PC-9 (cell line): ENCODE measurements at regions of chr10 and their contacts with region 1.

Region 1: DNA sequence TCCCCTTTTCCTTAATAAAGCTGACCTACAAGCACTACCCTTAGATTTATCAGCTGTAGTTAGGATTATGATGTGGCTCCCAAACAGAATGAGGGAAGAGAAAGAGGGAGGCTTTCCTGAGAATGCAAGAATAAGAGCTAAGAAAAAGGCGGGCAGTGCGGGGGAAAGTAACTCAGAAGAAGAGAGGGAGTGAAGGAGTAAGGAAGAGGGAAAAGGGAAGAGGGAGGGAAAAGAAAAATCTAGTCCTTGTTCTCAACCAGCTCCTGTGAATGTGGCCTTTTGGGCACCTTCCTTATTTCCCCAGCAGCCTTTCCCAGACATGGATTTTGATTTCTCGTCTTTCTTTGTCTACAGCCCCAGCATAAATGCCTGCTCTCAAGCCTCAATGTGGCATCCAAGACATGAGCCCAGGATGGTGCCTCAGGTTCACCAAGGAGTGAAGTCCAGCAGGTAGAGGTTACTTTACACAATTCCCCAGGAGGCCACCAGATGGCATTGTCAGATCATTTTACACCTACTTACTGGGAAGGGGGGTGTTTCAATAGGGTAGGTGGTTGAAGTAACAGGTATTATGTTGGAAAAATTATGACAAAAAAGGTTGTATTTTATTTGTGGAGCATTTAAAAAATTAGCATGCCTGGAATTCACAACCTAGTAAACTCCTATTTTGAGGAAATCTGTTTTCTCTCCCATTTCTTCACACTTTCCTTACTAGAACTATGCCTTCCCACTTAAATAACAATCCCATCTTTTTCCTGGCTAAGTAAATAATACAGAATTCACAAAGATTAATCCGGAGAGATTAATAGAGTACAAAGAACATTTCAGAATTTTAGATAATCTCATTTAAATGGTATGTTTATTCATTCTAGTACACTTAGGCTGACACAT is 106.5 kb downstream of the HTR7 start:
- DNase-seq: peak; percentile 37 to 43
- H3K4me3 ChIP-seq: no peak overlapping the region
- H3K27ac ChIP-seq: no peak overlapping the region
- H3K4me1 ChIP-seq: peaks cover 8% of the 10 kb centered on the region
- H3K27me3 ChIP-seq: no peaks in the 10 kb centered on the region
- CTCF ChIP-seq: peak; percentile 87

Region 2: GRCh38 chr10:89391917-89392756 is 1359.2 kb before region 1 on chr10 and contains the start of gene IFIT1:
- CTCF ChIA-PET with region 1: no interaction called
- POLR2A ChIA-PET with region 1: no interaction called
- intact Hi-C with region 1: no loop called
- DNase-seq: peak in 1 of 2 experiments; percentile 60
- H3K4me3 ChIP-seq: peak within 1 kb of the TSS; percentile 56
- H3K27ac ChIP-seq: peak within 1 kb of the TSS; percentile 61
- H3K4me1 ChIP-seq: peaks cover 7% of the 10 kb centered on the region
- H3K27me3 ChIP-seq: no peaks in the 10 kb centered on the region
- CTCF ChIP-seq: no peak
- total RNA-seq, gene IFIT1: 3.4 TPM in 2 replicates

Region 3: GRCh38 chr10:90769946-90770841 is 18.8 kb after region 1 on chr10:
- CTCF ChIA-PET with region 1: interaction called, 19 read pairs
- POLR2A ChIA-PET with region 1: no interaction called
- intact Hi-C with region 1: no loop called
- DNase-seq: no peak
- H3K4me3 ChIP-seq: no peak overlapping the region
- H3K27ac ChIP-seq: no peak overlapping the region
- H3K4me1 ChIP-seq: no peaks in the 10 kb centered on the region
- H3K27me3 ChIP-seq: no peaks in the 10 kb centered on the region
- CTCF ChIP-seq: no peak

Region 4: DNA sequence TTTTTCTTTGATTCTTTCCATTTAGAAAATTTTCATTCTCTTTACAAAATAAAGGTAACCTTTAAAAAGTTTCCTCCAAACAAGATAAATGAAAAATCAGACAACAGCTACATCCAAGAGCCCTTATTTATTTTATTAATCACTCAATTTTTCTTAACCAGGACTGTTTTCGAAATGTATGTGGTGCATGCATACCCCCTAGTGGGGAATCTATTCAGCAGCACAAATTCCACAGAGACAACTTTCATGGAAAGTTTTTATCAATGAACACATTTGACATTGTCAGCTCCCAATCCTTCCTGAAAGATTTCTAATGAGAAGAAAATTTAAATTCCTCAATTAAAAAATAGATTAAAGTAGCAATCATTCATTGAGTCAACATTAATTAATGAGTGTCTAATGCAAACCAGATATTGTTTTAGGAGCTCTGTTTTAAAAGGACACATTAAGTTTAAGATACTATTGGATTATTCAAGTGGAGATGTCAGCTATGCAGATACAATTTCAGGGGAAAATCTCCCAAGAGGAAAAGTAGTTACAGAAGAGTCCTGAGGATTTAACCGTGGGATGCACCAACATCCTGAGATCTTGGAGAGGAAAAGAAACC is 111.7 kb after region 1 on chr10:
- CTCF ChIA-PET with region 1: no interaction called
- POLR2A ChIA-PET with region 1: no interaction called
- intact Hi-C with region 1: loop called (anchors 1 kb)
- DNase-seq: no peak
- H3K4me3 ChIP-seq: no peak overlapping the region
- H3K27ac ChIP-seq: no peak overlapping the region
- H3K4me1 ChIP-seq: peaks cover 16% of the 10 kb centered on the region
- H3K27me3 ChIP-seq: no peaks in the 10 kb centered on the region
- CTCF ChIP-seq: peak; percentile 77

Region 5: DNA sequence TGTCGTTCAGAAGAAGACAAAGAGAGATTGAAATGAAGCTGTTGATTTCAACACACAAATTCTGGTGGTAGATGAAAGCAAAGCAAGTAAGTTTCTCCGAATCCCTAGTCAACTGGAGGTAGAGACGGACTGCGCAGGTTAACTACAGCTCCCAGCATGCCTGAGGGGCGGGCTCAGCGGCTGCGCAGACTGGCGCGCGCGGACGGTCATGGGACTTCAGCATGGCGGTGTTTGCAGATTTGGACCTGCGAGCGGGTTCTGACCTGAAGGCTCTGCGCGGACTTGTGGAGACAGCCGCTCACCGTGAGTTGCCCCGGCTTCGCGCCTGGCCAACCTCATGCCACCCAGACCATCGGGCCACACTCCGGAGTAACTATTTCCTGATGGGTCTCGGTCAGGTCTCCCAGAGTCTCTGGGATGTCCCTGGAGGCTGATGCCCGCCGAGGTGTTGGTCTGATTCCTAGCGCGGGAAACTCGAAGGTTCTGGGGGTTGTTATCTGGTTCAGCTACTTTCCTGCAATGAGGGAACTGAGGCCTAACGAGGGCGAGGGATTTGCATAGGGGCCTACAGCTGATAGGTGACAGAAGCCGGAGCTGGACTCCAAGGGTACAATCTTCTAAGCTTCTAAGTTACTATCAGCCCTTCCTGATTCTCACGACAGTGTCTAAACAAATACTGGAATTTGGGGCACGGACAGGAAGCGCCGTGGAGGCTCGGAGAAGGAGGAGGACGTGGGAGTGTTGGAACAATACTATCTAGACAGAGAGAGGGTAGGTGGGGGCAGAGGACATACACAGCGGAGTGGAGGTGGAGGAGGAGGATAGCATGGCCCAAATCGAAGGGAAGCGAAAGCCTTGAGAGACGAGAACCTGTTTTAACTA is 120.7 kb after region 1 on chr10 and contains the start of gene RPP30:
- CTCF ChIA-PET with region 1: interaction called, 4 read pairs
- POLR2A ChIA-PET with region 1: no interaction called
- intact Hi-C with region 1: loop called (anchors 2 kb)
- DNase-seq: peak; percentile 68 to 70
- H3K4me3 ChIP-seq: peak within 1 kb of the TSS; percentile 78
- H3K27ac ChIP-seq: no peak within 1 kb of the TSS
- H3K4me1 ChIP-seq: peaks cover 15% of the 10 kb centered on the region
- H3K27me3 ChIP-seq: no peaks in the 10 kb centered on the region
- CTCF ChIP-seq: no peak
- total RNA-seq, gene RPP30: 25.4 and 32.4 TPM in 2 replicates

Region 6: DNA sequence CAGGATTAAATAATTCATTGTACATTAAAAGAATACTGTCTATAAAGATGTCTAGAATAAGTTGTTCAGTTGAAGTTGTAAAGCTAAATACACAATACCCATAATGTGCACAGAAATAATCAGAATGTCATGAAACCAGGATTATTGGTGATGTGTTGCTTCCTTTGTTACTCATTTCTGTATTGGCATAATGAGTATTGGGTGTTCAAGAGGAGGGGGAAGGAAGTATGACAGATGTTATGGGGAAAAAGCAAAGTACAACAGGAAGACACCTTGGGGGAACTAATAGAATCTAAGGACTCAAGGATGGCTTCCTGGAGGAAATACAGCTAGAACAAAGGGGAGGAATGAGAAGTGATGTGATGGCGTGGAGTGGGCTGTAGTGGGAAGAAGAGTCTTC is 154.6 kb after region 1 on chr10:
- CTCF ChIA-PET with region 1: no interaction called
- POLR2A ChIA-PET with region 1: no interaction called
- intact Hi-C with region 1: no loop called
- DNase-seq: no peak
- H3K4me3 ChIP-seq: no peak overlapping the region
- H3K27ac ChIP-seq: no peak overlapping the region
- H3K4me1 ChIP-seq: no peaks in the 10 kb centered on the region
- H3K27me3 ChIP-seq: no peaks in the 10 kb centered on the region
- CTCF ChIP-seq: no peak

Region 7: DNA sequence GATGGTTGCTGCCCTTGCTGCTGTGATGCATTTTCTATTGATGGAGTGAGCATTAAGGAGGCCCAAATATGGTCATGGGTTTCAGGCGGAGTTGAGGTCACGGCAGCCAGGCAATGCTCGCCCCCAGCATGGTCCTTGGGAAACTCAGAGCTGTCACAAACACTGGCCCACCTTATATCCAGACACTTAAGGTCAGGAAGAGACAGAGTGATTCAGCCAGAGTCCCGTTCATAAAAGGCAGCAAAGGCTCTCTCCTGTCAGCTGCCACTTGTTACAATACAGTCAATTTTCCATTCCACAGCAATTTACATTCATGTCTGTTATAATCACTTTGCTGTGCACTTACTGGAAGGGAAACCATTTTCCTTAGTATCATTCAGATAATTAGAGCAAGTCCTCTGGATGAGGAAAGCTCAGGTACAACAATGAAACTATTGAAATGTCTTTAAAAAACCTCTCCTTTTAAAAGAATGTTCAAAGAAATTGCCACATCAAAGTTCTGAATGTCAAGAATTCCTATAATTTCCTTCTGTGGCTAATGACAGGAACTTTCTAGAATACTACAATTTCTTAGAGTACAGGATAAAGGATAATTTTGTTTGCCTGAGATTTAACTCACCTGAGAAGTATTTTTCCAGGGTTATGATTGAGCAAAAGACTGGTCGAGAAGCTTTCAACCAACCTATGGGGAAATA is 184.4 kb after region 1 on chr10:
- CTCF ChIA-PET with region 1: no interaction called
- POLR2A ChIA-PET with region 1: no interaction called
- intact Hi-C with region 1: no loop called
- DNase-seq: peak in 1 of 2 experiments; percentile 72
- H3K4me3 ChIP-seq: no peak overlapping the region
- H3K27ac ChIP-seq: no peak overlapping the region
- H3K4me1 ChIP-seq: peaks cover 19% of the 10 kb centered on the region
- H3K27me3 ChIP-seq: no peaks in the 10 kb centered on the region
- CTCF ChIP-seq: no peak